ENCODE measurements at regions of chr10 and their contacts with region 1.

Region 1: GRCh38 chr10:60305380-60305892 is 84.2 kb downstream of the ANK3 start:
- DNase-seq: no peak
- ATAC-seq: peak in 3 of 4 donors; percentile 7 to 54 (median 31)
- H3K4me3 ChIP-seq: peak overlapping the region in 1 of 12 donors; percentile 5
- H3K27ac ChIP-seq: peak overlapping the region in 8 of 12 donors; percentile 1 to 57 (median 30)
- H3K4me1 ChIP-seq: peaks cover 0 to 9% (median under 1%) of the 10 kb centered on the region in 12 donors
- H3K27me3 ChIP-seq: no peaks in the 10 kb centered on the region
- CTCF ChIP-seq: no peak
- POLR2A ChIP-seq: no peak

Region 2: DNA sequence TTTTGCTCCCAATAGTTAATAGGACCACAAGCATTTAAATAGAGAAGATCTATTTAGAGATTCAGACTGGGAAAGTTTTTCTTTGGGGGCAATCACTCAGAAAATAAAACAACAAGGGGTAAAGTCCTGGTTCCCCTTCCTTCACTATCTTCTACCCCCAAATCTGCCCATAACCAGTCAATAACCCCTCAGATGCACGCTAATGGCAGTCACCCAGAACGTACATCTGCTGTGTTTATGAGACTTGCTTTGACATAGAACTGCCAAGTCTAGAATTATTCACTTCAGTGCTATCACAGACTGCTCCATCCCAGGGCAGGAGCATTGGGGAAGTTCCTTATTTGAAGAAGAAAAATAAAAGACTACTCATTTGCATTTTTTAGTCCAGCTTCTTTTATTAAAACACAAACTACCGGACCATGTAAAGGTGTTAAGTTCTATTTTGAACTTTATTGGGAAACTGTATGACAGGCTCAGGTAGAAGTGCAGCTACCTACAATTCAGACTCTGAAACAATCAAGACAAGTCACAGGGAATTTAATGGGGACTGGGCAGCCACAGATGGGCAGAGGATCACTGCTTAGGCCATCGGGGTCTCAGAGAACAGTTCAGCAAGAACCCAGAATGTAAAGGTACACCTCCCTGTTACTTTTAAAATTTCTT is 45.9 kb after region 1 on chr10:
- intact Hi-C with region 1: loop called in 1 of 10 experiments (anchors 5 kb)
- DNase-seq: no peak
- ATAC-seq: no peak
- H3K4me3 ChIP-seq: no peak overlapping the region
- H3K27ac ChIP-seq: no peak overlapping the region
- H3K4me1 ChIP-seq: peaks cover 0 to 36% (median 9%) of the 10 kb centered on the region in 12 donors
- H3K27me3 ChIP-seq: no peaks in the 10 kb centered on the region
- CTCF ChIP-seq: no peak
- POLR2A ChIP-seq: no peak